ENCODE measurements at regions of chr11 and their contacts with region 1.

Region 1: DNA sequence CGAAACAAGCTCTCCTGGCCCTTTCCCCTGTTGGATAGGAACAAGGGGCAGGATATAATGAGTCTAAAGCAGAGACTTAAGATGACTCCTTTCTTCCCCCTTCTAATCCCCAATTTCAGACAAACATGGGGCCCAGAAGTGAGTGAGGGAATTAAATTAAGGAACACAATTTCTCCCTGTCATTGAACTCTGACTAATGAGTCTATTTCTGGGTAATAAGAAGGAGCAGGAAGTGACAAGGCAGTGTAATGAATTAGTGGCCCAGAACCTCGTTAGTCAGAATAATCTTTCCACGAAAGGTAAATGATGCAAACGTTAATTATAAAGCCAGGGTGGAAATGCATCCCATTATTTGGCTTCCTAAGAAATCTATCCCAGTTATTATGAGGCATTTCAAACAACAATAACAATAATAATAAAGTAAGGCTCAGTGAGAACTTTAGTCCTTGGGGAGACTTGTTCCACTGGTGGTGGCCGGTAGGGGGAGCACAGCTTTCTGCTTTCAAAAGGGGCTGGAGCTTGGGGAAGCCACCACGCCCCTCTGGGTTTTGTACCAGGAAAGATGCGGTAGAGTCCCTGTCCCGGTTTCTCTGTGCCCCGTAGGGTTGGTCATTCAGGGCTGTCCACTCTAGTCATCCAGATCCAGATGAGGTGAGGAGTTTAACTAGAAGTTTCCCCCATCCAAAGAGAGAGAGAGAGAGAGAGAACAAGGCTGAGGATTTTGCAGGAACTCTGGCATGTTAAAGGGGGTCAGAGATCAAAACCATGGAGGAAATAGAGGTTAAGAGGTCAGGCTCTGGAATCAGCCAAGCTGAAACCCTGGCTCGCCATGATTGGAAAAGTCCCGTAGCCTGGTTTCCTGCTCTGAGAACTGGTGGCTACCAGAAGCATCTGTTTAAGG is 298.3 kb downstream of the NTM start:
- DNase-seq: peak; percentile 70
- CTCF ChIP-seq: peak; percentile 76

Region 2: GRCh38 chr11:131302831-131303230 is 365.9 kb before region 1 on chr11:
- CTCF ChIA-PET with region 1: no interaction called
- POLR2A ChIA-PET with region 1: no interaction called
- DNase-seq: no peak
- CTCF ChIP-seq: no peak

Region 3: DNA sequence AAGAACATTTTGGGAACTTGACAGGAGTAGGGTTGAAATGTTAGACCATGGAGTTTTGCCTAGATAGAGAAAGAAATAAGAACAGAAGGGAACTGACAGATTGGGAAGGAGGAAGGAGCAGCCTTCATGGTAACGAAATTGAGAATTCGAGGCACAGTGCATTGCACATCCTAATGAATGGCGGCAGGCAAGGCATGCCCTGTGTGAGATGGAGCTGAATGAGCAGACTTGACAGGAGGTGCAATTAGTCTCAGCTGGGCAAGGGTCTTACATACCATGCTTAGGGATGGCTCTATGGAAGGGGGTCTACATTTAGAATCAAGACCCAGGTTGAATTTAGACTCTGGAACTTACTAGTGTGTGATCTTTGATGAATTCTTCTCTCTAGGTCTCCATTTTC is 323.3 kb before region 1 on chr11:
- CTCF ChIA-PET with region 1: no interaction called
- POLR2A ChIA-PET with region 1: no interaction called
- DNase-seq: no peak
- CTCF ChIP-seq: no peak

Region 4: GRCh38 chr11:131579932-131580387 is 88.8 kb before region 1 on chr11:
- CTCF ChIA-PET with region 1: interaction called, 134 read pairs
- POLR2A ChIA-PET with region 1: no interaction called
- DNase-seq: peak; percentile 55
- CTCF ChIP-seq: peak; percentile 59

Region 5: GRCh38 chr11:131653260-131653659 is 15.5 kb before region 1 on chr11:
- CTCF ChIA-PET with region 1: interaction called, 29 read pairs
- POLR2A ChIA-PET with region 1: no interaction called
- DNase-seq: no peak
- CTCF ChIP-seq: no peak